Activated naive CD4-positive, alpha-beta T cell treated with anti-CD3 and anti-CD28 coated beads for 36 hours (primary cell): ENCODE measurements at regions of chr3 and their contacts with region 1.

Region 1: GRCh38 chr3:151290673-151291072 is 12.3 kb upstream of the P2RY14 start:
- DNase-seq: no peak
- H3K4me3 Mint-ChIP-seq: no peak overlapping the region
- H3K27ac Mint-ChIP-seq: no peak overlapping the region
- H3K4me1 Mint-ChIP-seq: peaks cover 2% of the 10 kb centered on the region
- H3K27me3 Mint-ChIP-seq: peaks cover 2% of the 10 kb centered on the region

Region 2: DNA sequence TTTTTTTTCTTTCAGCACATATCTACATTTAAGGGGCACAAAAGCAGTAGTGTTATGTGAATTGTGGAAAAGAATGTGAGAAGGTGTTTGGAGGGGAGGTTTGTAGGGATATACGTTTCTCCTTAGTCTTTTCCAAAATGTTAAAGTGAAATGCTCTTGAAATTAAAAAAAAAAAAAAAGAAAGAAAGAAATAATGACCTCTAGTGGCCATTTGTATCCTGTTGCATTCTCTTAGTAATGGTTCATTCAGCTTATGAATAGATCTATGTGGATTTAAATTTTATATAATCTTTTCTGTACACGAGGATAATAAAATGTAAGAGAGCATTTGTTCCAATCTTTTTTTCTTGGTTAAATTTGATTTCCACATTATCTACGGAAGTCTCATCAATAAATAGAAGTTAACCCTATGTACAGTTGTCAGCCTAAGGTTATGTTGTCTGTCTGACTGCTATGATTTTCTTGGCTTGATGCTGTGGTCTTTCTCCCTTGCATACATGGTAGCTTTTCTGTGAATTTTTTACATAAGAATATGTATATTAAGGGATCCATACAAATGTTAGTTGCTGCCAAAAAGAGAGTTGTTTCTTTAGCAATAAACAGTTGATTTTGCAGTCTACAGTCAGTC is 37.0 kb after region 1 on chr3:
- CTCF ChIA-PET with region 1: interaction called, 24 read pairs
- intact Hi-C with region 1: loop called (anchors 1 kb)
- DNase-seq: no peak
- H3K4me3 Mint-ChIP-seq: no peak overlapping the region
- H3K27ac Mint-ChIP-seq: no peak overlapping the region
- H3K4me1 Mint-ChIP-seq: peaks cover 7% of the 10 kb centered on the region
- H3K27me3 Mint-ChIP-seq: peaks cover 4% of the 10 kb centered on the region

Region 3: GRCh38 chr3:151439652-151440129 is 149.0 kb after region 1 on chr3:
- CTCF ChIA-PET with region 1: no interaction called
- intact Hi-C with region 1: loop called (anchors 2 kb)
- DNase-seq: no peak
- H3K4me3 Mint-ChIP-seq: no peak overlapping the region
- H3K27ac Mint-ChIP-seq: no peak overlapping the region
- H3K4me1 Mint-ChIP-seq: no peaks in the 10 kb centered on the region
- H3K27me3 Mint-ChIP-seq: peaks cover 2% of the 10 kb centered on the region